ENCODE measurements at regions of chr13 and their contacts with region 1.

Region 1: GRCh38 chr13:43804461-43805070 is 17.8 kb upstream of the ENOX1 start:
- H3K4me3 Mint-ChIP-seq: no peak overlapping the region
- H3K27ac Mint-ChIP-seq: no peak overlapping the region
- H3K4me1 Mint-ChIP-seq: no peaks in the 10 kb centered on the region
- H3K27me3 Mint-ChIP-seq: no peaks in the 10 kb centered on the region

Region 2: GRCh38 chr13:42594970-42595571 is 1209.5 kb before region 1 on chr13:
- intact Hi-C with region 1: loop called (anchors 5 kb)
- H3K4me3 Mint-ChIP-seq: no peak overlapping the region
- H3K27ac Mint-ChIP-seq: no peak overlapping the region
- H3K4me1 Mint-ChIP-seq: no peaks in the 10 kb centered on the region
- H3K27me3 Mint-ChIP-seq: peaks cover 13% of the 10 kb centered on the region

Region 3: GRCh38 chr13:42969558-42970172 is 834.9 kb before region 1 on chr13:
- intact Hi-C with region 1: loop called (anchors 1 kb)
- H3K4me3 Mint-ChIP-seq: no peak overlapping the region
- H3K27ac Mint-ChIP-seq: no peak overlapping the region
- H3K4me1 Mint-ChIP-seq: peaks cover 7% of the 10 kb centered on the region
- H3K27me3 Mint-ChIP-seq: no peaks in the 10 kb centered on the region

Region 4: DNA sequence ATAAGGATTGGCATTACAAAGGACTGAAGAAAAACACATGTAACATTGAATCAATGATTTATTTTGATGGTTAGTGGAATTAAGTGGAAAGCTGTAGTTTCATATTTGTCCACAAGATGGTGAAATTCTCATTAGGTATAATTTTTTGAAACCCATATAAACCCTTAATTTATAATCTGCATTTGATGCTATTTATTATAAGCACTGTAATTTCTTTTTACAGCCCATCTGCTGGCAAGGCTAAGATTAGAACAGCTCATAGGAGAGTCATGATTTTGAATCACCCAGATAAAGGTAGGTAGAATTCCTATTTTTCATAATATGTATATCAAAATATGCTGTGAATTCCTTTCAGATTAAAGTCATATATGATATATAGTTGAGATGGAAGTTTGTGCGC is 719.0 kb before region 1 on chr13:
- intact Hi-C with region 1: loop called (anchors 2 kb)
- H3K4me3 Mint-ChIP-seq: no peak overlapping the region
- H3K27ac Mint-ChIP-seq: no peak overlapping the region
- H3K4me1 Mint-ChIP-seq: peaks cover 16% of the 10 kb centered on the region
- H3K27me3 Mint-ChIP-seq: no peaks in the 10 kb centered on the region

Region 5: GRCh38 chr13:43303033-43303729 is 501.4 kb before region 1 on chr13:
- intact Hi-C with region 1: loop called (anchors 2 kb)
- H3K4me3 Mint-ChIP-seq: no peak overlapping the region
- H3K27ac Mint-ChIP-seq: no peak overlapping the region
- H3K4me1 Mint-ChIP-seq: peaks cover 19% of the 10 kb centered on the region
- H3K27me3 Mint-ChIP-seq: peaks cover 19% of the 10 kb centered on the region

Region 6: GRCh38 chr13:43946281-43946680 is 141.7 kb after region 1 on chr13:
- intact Hi-C with region 1: no loop called
- H3K4me3 Mint-ChIP-seq: no peak overlapping the region
- H3K27ac Mint-ChIP-seq: no peak overlapping the region
- H3K4me1 Mint-ChIP-seq: no peaks in the 10 kb centered on the region
- H3K27me3 Mint-ChIP-seq: peaks cover 85% of the 10 kb centered on the region